CD8-positive, alpha-beta memory T cell (primary cell): ENCODE measurements at regions of chr6 and their contacts with region 1.

Region 1: GRCh38 chr6:26103770-26104456 is 16.7 kb downstream of the HFE start:
- DNase-seq: peak; percentile 75 to 96 (median 93)
- H3K4me3 ChIP-seq: peak overlapping the region; percentile 51
- H3K4me3 Mint-ChIP-seq: peak overlapping the region; percentile 83 to 92 (median 87)
- H3K27ac ChIP-seq: peak overlapping the region; percentile 82
- H3K27ac Mint-ChIP-seq: peak overlapping the region; percentile 96 to 98 (median 97)
- H3K4me1 ChIP-seq: peaks cover 18% of the 10 kb centered on the region
- H3K4me1 Mint-ChIP-seq: peaks cover 16 to 20% (median 17%) of the 10 kb centered on the region in 3 donors
- H3K27me3 ChIP-seq: no peaks in the 10 kb centered on the region
- H3K27me3 Mint-ChIP-seq: peaks cover 0 to 4% of the 10 kb centered on the region in 2 donors

Region 2: DNA sequence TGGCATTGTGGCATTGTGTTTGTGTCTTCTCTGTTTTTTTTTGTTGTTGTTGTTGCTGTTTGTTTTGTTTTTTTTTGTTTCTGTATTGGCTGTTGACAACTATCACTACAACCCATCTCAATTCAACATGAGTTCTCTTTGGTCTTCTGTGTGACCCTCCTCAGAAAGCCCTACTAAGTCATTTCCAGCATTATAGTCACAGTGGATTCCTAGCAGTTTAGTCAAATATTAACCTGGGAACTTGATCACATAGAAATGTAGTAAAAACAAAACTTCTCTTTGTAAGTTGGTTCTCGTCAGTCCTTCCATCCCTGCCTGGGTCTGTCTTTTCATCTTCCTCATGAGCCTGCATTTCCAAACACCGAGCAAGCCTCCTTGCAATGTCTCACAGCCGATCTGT is 190.2 kb before region 1 on chr6:
- CTCF ChIA-PET with region 1: no interaction called
- POLR2A ChIA-PET with region 1: no interaction called
- DNase-seq: no peak
- H3K4me3 ChIP-seq: no peak overlapping the region
- H3K4me3 Mint-ChIP-seq: no peak overlapping the region
- H3K27ac ChIP-seq: no peak overlapping the region
- H3K27ac Mint-ChIP-seq: no peak overlapping the region
- H3K4me1 ChIP-seq: no peaks in the 10 kb centered on the region
- H3K4me1 Mint-ChIP-seq: no peaks in the 10 kb centered on the region
- H3K27me3 ChIP-seq: no peaks in the 10 kb centered on the region
- H3K27me3 Mint-ChIP-seq: peaks cover 6 to 21% of the 10 kb centered on the region in 2 donors

Region 3: DNA sequence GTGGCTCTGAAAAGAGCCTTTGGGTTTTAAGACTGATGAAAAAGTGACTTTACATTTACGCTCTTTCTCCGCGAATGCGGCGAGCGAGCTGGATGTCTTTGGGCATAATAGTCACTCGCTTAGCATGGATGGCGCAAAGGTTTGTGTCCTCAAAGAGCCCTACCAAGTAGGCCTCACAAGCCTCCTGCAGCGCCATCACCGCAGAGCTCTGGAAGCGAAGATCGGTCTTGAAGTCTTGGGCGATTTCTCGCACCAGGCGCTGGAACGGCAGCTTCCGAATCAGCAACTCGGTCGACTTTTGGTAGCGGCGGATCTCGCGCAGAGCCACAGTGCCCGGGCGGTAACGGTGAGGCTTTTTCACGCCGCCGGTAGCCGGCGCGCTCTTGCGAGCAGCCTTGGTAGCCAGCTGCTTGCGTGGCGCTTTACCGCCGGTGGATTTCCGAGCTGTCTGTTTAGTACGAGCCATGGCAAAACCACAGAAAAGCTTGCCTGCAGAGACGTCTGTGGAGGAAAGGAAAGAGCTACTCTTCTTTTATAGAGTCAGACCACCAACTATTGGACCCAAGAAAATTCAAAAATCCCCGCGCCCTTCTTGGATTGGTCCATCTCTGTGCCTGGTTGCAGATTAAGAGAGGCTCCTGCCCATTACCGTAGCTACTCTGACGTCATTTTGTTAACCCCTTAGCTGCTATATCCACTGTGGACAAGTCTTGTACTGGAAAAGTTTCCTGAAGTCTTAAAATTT is 72.1 kb before region 1 on chr6:
- CTCF ChIA-PET with region 1: no interaction called
- POLR2A ChIA-PET with region 1: interaction called, 26 read pairs
- DNase-seq: peak; percentile 75 to 91 (median 86)
- H3K4me3 ChIP-seq: peak overlapping the region; percentile 70
- H3K4me3 Mint-ChIP-seq: peak overlapping the region; percentile 89 to 97 (median 95)
- H3K27ac ChIP-seq: peak overlapping the region; percentile 85
- H3K27ac Mint-ChIP-seq: peak overlapping the region; percentile 96 to 99 (median 98)
- H3K4me1 ChIP-seq: peaks cover 30% of the 10 kb centered on the region
- H3K4me1 Mint-ChIP-seq: peaks cover 47 to 69% (median 53%) of the 10 kb centered on the region in 3 donors
- H3K27me3 ChIP-seq: no peaks in the 10 kb centered on the region
- H3K27me3 Mint-ChIP-seq: peaks cover 0 to 6% of the 10 kb centered on the region in 2 donors

Region 4: GRCh38 chr6:26054857-26055669 is 48.9 kb before region 1 on chr6:
- CTCF ChIA-PET with region 1: interaction called, 375 read pairs
- POLR2A ChIA-PET with region 1: interaction called, 34 read pairs
- DNase-seq: peak; percentile 74 to 89 (median 86)
- H3K4me3 ChIP-seq: peak overlapping the region; percentile 92
- H3K4me3 Mint-ChIP-seq: peak overlapping the region; percentile 90 to 97 (median 94)
- H3K27ac ChIP-seq: peak overlapping the region; percentile 96
- H3K27ac Mint-ChIP-seq: peak overlapping the region; percentile 90 to 99 (median 97)
- H3K4me1 ChIP-seq: peaks cover 9% of the 10 kb centered on the region
- H3K4me1 Mint-ChIP-seq: peaks cover 17 to 30% (median 26%) of the 10 kb centered on the region in 3 donors
- H3K27me3 ChIP-seq: no peaks in the 10 kb centered on the region
- H3K27me3 Mint-ChIP-seq: peaks cover 0 to 4% of the 10 kb centered on the region in 2 donors

Region 5: GRCh38 chr6:26087284-26088115 is 16.4 kb before region 1 on chr6 and contains the start of gene HFE:
- CTCF ChIA-PET with region 1: no interaction called
- POLR2A ChIA-PET with region 1: interaction called, 28 read pairs
- DNase-seq: peak; percentile 8 to 49 (median 27)
- H3K4me3 ChIP-seq: peak within 1 kb of the TSS; percentile 86
- H3K4me3 Mint-ChIP-seq: peak within 1 kb of the TSS; percentile 88 to 96 (median 91)
- H3K27ac ChIP-seq: peak within 1 kb of the TSS; percentile 70
- H3K27ac Mint-ChIP-seq: peak within 1 kb of the TSS; percentile 78 to 95 (median 89)
- H3K4me1 ChIP-seq: peaks cover 26% of the 10 kb centered on the region
- H3K4me1 Mint-ChIP-seq: peaks cover 31 to 37% (median 36%) of the 10 kb centered on the region in 3 donors
- H3K27me3 ChIP-seq: no peaks in the 10 kb centered on the region
- H3K27me3 Mint-ChIP-seq: no peaks in the 10 kb centered on the region
- total RNA-seq, gene HFE: 0.37 to 1.1 TPM

Region 6: DNA sequence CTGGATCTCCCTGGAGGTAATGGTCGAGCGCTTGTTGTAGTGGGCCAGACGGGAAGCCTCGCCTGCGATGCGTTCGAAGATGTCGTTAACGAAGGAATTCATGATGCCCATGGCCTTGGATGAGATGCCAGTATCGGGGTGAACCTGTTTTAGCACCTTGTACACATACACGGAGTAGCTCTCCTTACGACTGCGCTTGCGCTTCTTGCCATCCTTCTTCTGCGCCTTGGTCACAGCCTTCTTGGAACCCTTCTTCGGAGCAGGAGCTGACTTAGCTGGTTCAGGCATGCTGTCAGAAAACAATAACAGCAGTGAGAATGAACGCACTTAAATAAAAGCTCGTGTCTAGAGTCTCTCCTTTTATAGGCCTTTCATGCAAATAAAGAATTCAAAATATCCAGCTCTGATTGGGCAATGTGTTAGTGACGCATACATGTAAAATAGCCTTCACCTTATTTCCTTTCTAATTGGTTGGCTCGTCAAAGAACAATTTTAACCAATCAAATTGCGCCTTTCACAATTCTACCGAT is 112.5 kb after region 1 on chr6:
- CTCF ChIA-PET with region 1: no interaction called
- POLR2A ChIA-PET with region 1: interaction called, 22 read pairs
- DNase-seq: peak; percentile 43 to 93 (median 91)
- H3K4me3 ChIP-seq: peak overlapping the region; percentile 91
- H3K4me3 Mint-ChIP-seq: no peak overlapping the region
- H3K27ac ChIP-seq: peak overlapping the region; percentile 94
- H3K27ac Mint-ChIP-seq: no peak overlapping the region
- H3K4me1 ChIP-seq: peaks cover 23% of the 10 kb centered on the region
- H3K4me1 Mint-ChIP-seq: peaks cover 2 to 8% (median 5%) of the 10 kb centered on the region in 3 donors
- H3K27me3 ChIP-seq: no peaks in the 10 kb centered on the region
- H3K27me3 Mint-ChIP-seq: no peaks in the 10 kb centered on the region

Region 7: GRCh38 chr6:27871924-27872638 is 1768.2 kb after region 1 on chr6:
- CTCF ChIA-PET with region 1: no interaction called
- POLR2A ChIA-PET with region 1: interaction called, 14 read pairs
- DNase-seq: peak; percentile 69 to 95 (median 91)
- H3K4me3 ChIP-seq: peak overlapping the region; percentile 71
- H3K4me3 Mint-ChIP-seq: peak overlapping the region; percentile 82 to 95 (median 88)
- H3K27ac ChIP-seq: peak overlapping the region; percentile 71
- H3K27ac Mint-ChIP-seq: peak overlapping the region; percentile 90 to 99 (median 94)
- H3K4me1 ChIP-seq: peaks cover 24% of the 10 kb centered on the region
- H3K4me1 Mint-ChIP-seq: peaks cover 31 to 39% (median 37%) of the 10 kb centered on the region in 3 donors
- H3K27me3 ChIP-seq: no peaks in the 10 kb centered on the region
- H3K27me3 Mint-ChIP-seq: peaks cover 0 to 3% of the 10 kb centered on the region in 2 donors